Psoas muscle (tissue), 8 donors: ENCODE measurements at regions of chr19 and their contacts with region 1.

Region 1: GRCh38 chr19:40633207-40633606 is 32.0 kb downstream of the LTBP4 start:
- DNase-seq: no peak
- ATAC-seq: no peak
- H3K4me3 ChIP-seq: no peak overlapping the region
- H3K27ac ChIP-seq: no peak overlapping the region
- H3K4me1 ChIP-seq: no peaks in the 10 kb centered on the region
- H3K27me3 ChIP-seq: no peaks in the 10 kb centered on the region
- CTCF ChIP-seq: no peak

Region 2: GRCh38 chr19:40139533-40140287 is 493.5 kb before region 1 on chr19:
- intact Hi-C with region 1: loop called in 1 of 2 experiments (anchors 1 kb)
- DNase-seq: no peak
- ATAC-seq: peak in 2 of 4 donors; percentile 22 to 76
- H3K4me3 ChIP-seq: no peak overlapping the region
- H3K27ac ChIP-seq: no peak overlapping the region
- H3K4me1 ChIP-seq: peaks cover 6% of the 10 kb centered on the region
- H3K27me3 ChIP-seq: peaks cover 0 to 2% (median 2%) of the 10 kb centered on the region in 3 donors
- CTCF ChIP-seq: peak; percentile 66

Region 3: DNA sequence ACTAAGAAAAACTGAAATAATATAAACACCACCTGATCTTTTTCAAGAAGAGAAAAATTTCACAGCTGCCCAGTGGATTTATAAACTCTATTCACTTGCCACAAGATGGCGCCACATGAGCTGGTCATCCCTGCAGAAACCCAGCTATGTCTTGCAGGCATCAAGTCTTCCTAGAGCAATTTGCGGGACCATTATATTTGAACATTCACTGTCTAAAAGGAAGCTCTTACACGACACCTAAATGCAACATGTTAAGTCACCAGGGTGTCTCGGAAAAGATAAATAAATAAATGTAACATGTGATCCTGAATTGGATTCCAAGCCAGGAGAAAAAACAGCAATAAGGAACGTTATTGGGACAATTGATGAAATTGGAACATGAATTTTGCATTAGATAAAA is 327.8 kb before region 1 on chr19:
- intact Hi-C with region 1: loop called in 1 of 2 experiments (anchors 5 kb)
- DNase-seq: peak; percentile 75 to 86
- ATAC-seq: peak; percentile 63 to 91 (median 84)
- H3K4me3 ChIP-seq: no peak overlapping the region
- H3K27ac ChIP-seq: no peak overlapping the region
- H3K4me1 ChIP-seq: no peaks in the 10 kb centered on the region
- H3K27me3 ChIP-seq: no peaks in the 10 kb centered on the region
- CTCF ChIP-seq: peak; percentile 70

Region 4: DNA sequence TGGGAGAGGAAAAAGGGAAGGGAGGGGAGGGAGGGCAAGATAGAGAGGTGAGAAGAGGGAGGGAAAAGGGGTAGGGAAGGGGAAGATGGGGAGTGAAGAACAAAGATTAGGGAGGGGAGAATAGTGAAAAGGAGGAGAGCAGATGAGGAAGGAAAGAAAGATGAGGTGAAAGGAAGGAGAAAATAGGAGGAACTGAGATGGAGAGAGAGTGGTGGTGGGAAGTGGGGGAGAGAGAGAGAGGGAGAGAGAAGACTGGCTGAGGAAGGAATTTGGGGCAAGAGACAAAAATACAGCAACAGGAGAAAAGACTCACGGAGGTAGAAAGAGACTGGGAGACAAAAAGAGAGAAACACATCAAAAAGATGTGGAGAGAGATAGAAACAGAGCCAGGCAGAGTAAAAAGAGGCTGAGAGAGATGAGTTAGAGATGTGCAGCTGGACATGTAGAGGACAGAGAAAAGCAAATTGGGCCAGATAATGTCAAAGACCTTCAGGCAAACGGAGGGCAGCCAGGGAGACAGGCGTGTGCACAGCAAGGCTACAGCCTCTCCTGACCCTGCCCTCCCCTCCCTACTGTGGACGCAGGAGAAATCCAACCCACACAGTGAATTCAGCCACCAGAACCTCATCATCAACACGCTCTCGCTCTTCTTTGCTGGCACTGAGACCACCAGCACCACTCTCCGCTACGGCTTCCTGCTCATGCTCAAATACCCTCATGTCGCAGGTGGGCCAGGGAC is 308.4 kb after region 1 on chr19:
- intact Hi-C with region 1: no loop called
- DNase-seq: no peak
- ATAC-seq: no peak
- H3K4me3 ChIP-seq: no peak overlapping the region
- H3K27ac ChIP-seq: no peak overlapping the region
- H3K4me1 ChIP-seq: no peaks in the 10 kb centered on the region
- H3K27me3 ChIP-seq: peaks cover 0 to 4% (median 0%) of the 10 kb centered on the region in 3 donors
- CTCF ChIP-seq: no peak